K562 (cell line): ENCODE measurements at regions of chr1 and their contacts with region 1.

Region 1: GRCh38 chr1:227002531-227003049 is 62.5 kb downstream of the COQ8A start:
- DNase-seq: no peak
- ATAC-seq: peak; percentile 47
- H3K4me3 ChIP-seq: no peak overlapping the region
- H3K27ac ChIP-seq: no peak overlapping the region
- H3K4me1 ChIP-seq: no peaks in the 10 kb centered on the region
- H3K27me3 ChIP-seq: no peaks in the 10 kb centered on the region
- CTCF ChIP-seq: no peak
- EP300 ChIP-seq: no peak
- POLR2A ChIP-seq: no peak
- RAD21 ChIP-seq: no peak

Region 2: GRCh38 chr1:226990133-226990716 is 12.4 kb before region 1 on chr1:
- CTCF ChIA-PET with region 1: no interaction called
- POLR2A ChIA-PET with region 1: interaction called, 24 read pairs
- in situ Hi-C with region 1: no loop called
- intact Hi-C with region 1: no loop called
- DNase-seq: peak in 3 of 4 experiments; percentile 57 to 88 (median 85)
- ATAC-seq: peak; percentile 93
- H3K4me3 ChIP-seq: no peak overlapping the region
- H3K27ac ChIP-seq: peak overlapping the region; percentile 77
- H3K4me1 ChIP-seq: peaks cover 23 to 29% of the 10 kb centered on the region in 2 experiments
- H3K27me3 ChIP-seq: no peaks in the 10 kb centered on the region
- CTCF ChIP-seq: no peak
- EP300 ChIP-seq: peak; percentile 68
- POLR2A ChIP-seq: 0 out of 2 replicates have a peak, but pooled peaks have one; percentile 23
- RAD21 ChIP-seq: peak in 1 of 2 experiments; percentile 32; a peak in 1 of 4 replicates

Region 3: GRCh38 chr1:227072991-227073390 is 70.4 kb after region 1 on chr1:
- CTCF ChIA-PET with region 1: no interaction called
- POLR2A ChIA-PET with region 1: no interaction called
- in situ Hi-C with region 1: no loop called
- intact Hi-C with region 1: no loop called
- DNase-seq: no peak
- ATAC-seq: no peak
- H3K4me3 ChIP-seq: no peak overlapping the region
- H3K27ac ChIP-seq: no peak overlapping the region
- H3K4me1 ChIP-seq: no peaks in the 10 kb centered on the region; a peak in 1 of 5 replicates
- H3K27me3 ChIP-seq: no peaks in the 10 kb centered on the region
- CTCF ChIP-seq: no peak
- EP300 ChIP-seq: no peak
- POLR2A ChIP-seq: no peak
- RAD21 ChIP-seq: no peak